Activated T-helper 2 cell treated with anti-CD3 and anti-CD28 coated beads, Interferon-gamma antibody, Interleukin-2, Interleukin-4, amounts not matched to agents 10 μg/mL and 5 μg/mL and 100 μg/mL, durations not matched to agents 14 hours and 24 hours and 36 hours (primary cell): ENCODE measurements at regions of chr18 and their contacts with region 1.

Region 1: DNA sequence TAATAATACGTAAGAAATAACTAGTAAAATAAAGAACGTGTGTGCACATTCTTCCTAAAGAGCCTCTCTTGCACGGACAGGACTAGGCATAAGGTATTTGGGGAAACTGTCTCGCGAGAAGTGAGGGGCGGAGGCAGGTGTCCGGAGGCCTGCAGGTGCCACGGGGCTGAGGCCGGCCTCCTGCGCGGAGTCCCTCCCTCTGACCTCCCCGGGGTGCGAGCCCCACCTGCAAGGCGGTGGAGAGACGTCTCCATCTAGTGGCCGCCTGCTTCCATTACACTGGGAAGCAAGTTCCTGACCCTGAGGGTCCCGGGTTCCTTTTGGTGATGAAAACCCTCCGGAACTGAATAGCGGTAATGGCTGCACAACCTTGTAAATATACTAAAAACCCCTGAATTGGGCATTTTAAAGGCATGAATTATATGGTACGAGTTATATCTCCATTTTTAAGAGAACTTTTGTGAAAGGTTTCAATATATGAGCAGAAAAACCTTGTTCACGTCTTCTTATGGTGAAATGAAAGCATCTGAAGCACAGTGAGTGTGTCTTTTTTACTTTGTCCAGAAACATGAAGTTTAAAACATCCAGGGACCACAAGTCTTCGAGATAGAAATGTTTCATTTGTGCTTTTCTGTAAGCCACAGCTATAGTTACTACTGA is 35.5 kb upstream of the CTDP1 start:
- DNase-seq: peak; percentile 57
- H3K4me3 Mint-ChIP-seq: no peak overlapping the region
- H3K27ac Mint-ChIP-seq: no peak overlapping the region
- H3K4me1 Mint-ChIP-seq: no peaks in the 10 kb centered on the region
- H3K27me3 Mint-ChIP-seq: peaks cover 7% of the 10 kb centered on the region

Region 2: GRCh38 chr18:79378542-79379250 is 265.4 kb before region 1 on chr18:
- intact Hi-C with region 1: loop called (anchors 1 kb)
- DNase-seq: peak; percentile 71
- H3K4me3 Mint-ChIP-seq: no peak overlapping the region
- H3K27ac Mint-ChIP-seq: no peak overlapping the region
- H3K4me1 Mint-ChIP-seq: peaks cover 11% of the 10 kb centered on the region
- H3K27me3 Mint-ChIP-seq: no peaks in the 10 kb centered on the region

Region 3: DNA sequence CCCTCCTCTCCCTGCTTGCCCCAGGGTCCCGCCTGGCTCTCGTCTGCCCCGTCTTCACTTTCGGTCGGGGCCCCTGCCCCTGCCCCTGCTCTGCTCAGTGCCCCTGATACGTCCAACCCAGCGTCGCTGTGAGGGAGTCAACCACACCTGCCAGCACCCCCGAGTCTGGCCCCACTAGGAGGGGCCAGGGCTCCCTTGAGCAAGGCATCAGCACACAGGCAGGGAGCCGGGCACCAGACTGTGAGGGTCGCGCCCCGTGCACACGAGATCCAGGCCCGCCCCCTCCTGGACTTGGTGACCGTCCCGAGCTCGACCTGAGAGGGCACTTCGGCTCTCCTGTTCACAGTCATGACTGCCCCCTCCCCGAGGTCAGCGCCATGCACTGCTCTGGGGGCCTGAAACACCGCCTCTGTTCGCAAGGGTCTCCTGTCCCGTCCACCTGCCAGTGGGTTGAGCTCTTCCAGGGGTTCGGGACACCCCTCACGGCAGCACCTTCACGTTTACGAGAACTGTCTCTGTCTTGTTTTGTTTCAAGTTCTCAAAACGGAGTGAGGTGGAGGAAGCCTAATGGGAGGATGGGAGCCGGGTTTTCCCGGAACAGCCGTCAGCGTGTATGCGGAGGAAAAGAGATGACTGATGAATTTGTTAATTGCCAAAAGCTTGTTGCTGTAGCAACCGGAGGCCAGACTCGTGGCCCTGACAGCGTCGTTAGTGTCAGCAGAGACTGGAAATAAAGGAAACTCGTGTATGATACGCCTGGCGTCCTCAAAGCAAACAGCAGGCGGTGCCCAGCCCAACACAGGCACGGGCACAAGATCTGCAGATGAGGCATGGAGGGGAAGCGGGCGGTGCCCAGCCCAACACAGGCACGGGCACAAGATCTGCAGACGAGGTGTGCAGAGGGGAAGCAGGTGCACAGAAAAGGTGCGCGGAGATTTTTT is 105.4 kb after region 1 on chr18:
- intact Hi-C with region 1: no loop called
- DNase-seq: no peak
- H3K4me3 Mint-ChIP-seq: no peak overlapping the region
- H3K27ac Mint-ChIP-seq: no peak overlapping the region
- H3K4me1 Mint-ChIP-seq: no peaks in the 10 kb centered on the region
- H3K27me3 Mint-ChIP-seq: no peaks in the 10 kb centered on the region